ENCODE measurements at regions of chr21 and their contacts with region 1.

Region 1: DNA sequence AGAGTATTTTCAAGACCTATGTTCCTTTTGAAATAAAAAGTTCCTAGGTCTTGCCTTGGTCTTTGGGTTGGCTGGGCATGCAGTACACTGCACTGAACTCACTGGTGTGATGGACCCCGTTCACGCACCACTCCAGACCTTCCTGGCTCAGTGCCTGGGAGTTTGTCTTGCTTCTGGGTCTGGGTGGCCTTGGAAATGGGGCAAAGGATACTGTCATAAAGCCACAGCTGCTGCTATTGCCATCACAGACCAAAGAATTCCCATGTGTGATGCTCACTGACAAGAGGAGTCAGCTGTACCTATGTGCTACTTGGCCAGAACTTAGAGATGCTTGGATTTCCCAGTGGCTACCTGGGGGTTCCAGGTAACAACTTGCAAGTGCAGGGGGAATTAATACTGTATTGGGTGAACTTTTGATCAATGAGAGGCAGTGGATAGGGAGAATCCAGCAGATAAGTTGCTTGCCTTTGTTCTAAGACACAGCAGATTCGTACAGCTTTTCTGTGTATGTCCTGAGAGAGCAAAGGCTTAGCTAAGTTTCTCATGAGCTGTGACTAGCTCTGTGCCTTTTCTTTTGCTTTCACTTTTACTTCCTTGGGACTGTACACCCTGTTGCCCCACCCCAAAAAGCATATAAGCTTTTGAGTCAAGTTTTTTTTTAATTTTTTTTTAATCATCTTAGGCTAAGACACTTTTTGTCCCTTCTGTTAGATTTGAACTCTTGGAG is 115.3 kb downstream of the RUNX1 start:
- DNase-seq: peak; percentile 49
- ATAC-seq: peak; percentile 92
- H3K4me3 Mint-ChIP-seq: peak overlapping the region; percentile 73
- H3K27ac Mint-ChIP-seq: peak overlapping the region; percentile 93
- H3K4me1 Mint-ChIP-seq: peaks cover 59% of the 10 kb centered on the region
- H3K27me3 Mint-ChIP-seq: no peaks in the 10 kb centered on the region

Region 2: GRCh38 chr21:34874684-34875513 is 58.9 kb before region 1 on chr21:
- CTCF ChIA-PET with region 1: no interaction called
- POLR2A ChIA-PET with region 1: no interaction called
- DNase-seq: no peak
- ATAC-seq: no peak
- H3K4me3 Mint-ChIP-seq: no peak overlapping the region
- H3K27ac Mint-ChIP-seq: no peak overlapping the region
- H3K4me1 Mint-ChIP-seq: peaks cover 2% of the 10 kb centered on the region
- H3K27me3 Mint-ChIP-seq: no peaks in the 10 kb centered on the region

Region 3: GRCh38 chr21:34946916-34947534 is 13.3 kb after region 1 on chr21:
- CTCF ChIA-PET with region 1: interaction called, 35 read pairs
- POLR2A ChIA-PET with region 1: interaction called, 5 read pairs
- DNase-seq: no peak
- ATAC-seq: no peak
- H3K4me3 Mint-ChIP-seq: no peak overlapping the region
- H3K27ac Mint-ChIP-seq: no peak overlapping the region
- H3K4me1 Mint-ChIP-seq: peaks cover 40% of the 10 kb centered on the region
- H3K27me3 Mint-ChIP-seq: peaks cover under 1% of the 10 kb centered on the region

Region 4: DNA sequence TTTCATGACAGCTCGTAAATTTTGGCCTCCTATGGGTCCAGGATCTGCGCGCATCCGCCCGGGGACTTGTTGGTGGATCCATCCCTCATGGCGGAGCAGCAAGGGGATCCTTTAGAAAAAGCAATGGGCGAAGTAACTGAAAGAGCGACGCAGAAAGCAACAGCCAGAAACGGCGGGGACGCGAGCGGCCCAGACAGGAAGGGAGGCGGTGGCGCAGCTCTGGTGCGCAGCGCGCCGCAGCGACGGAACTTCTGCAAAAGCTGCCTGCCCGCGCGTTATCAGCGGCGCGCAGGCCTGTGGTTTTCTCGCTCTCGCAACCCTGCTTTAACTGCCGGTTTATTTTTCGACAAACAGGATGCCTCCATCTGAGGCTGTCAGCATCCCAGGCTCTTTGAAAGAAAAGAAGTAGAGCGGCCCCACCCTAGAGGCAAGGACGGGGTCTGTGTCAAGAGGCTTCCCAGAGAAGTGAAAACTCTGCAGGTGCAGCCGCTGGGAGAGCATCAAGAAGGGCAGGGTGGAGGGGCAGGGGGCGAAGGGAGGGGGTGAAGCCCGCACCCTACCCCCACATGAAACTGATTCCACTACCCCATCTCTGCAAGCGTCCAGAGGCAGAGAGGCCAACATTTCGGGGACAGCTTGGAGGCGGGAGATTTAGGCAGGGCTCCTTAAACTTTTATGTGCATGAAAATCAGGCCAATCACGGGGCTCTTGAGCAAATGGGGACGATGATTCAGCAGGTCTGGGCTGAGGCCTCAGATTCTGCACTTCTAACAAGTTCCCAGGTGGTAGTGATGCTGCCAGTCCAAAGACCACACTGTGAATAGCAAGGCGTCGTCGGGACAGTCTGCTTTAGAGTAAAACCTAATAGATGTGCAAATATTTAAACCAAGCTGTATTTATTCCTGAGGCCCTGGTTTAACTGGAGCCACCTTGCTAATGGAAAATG is 93.1 kb after region 1 on chr21:
- CTCF ChIA-PET with region 1: interaction called, 11 read pairs
- POLR2A ChIA-PET with region 1: interaction called, 3 read pairs
- DNase-seq: peak; percentile 91
- ATAC-seq: peak; percentile 93
- H3K4me3 Mint-ChIP-seq: peak overlapping the region; percentile 79
- H3K27ac Mint-ChIP-seq: peak overlapping the region; percentile 99
- H3K4me1 Mint-ChIP-seq: peaks cover 63% of the 10 kb centered on the region
- H3K27me3 Mint-ChIP-seq: peaks cover 3% of the 10 kb centered on the region

Region 5: GRCh38 chr21:35051287-35051818 is 117.6 kb after region 1 on chr21:
- CTCF ChIA-PET with region 1: interaction called, 20 read pairs
- POLR2A ChIA-PET with region 1: interaction called, 7 read pairs
- DNase-seq: peak; percentile 88
- ATAC-seq: peak; percentile 57
- H3K4me3 Mint-ChIP-seq: peak overlapping the region; percentile 30
- H3K27ac Mint-ChIP-seq: peak overlapping the region; percentile 66
- H3K4me1 Mint-ChIP-seq: peaks cover 54% of the 10 kb centered on the region
- H3K27me3 Mint-ChIP-seq: peaks cover 10% of the 10 kb centered on the region

Measured in activated CD8-positive, alpha-beta T cell treated with anti-CD3 and anti-CD28 coated beads, Interleukin-2, amount 10 ng/mL, durations not matched to agents 7 days and 5 days (primary cell).